ENCODE measurements at regions of chr2 and their contacts with region 1.

Region 1: GRCh38 chr2:224369028-224369632 is 32.8 kb downstream of the FAM124B start:
- DNase-seq: no peak
- ATAC-seq: no peak
- H3K4me3 ChIP-seq: no peak overlapping the region
- H3K27ac ChIP-seq: no peak overlapping the region
- H3K4me1 ChIP-seq: no peaks in the 10 kb centered on the region
- H3K27me3 ChIP-seq: no peaks in the 10 kb centered on the region
- CTCF ChIP-seq: peak; percentile 76

Region 2: DNA sequence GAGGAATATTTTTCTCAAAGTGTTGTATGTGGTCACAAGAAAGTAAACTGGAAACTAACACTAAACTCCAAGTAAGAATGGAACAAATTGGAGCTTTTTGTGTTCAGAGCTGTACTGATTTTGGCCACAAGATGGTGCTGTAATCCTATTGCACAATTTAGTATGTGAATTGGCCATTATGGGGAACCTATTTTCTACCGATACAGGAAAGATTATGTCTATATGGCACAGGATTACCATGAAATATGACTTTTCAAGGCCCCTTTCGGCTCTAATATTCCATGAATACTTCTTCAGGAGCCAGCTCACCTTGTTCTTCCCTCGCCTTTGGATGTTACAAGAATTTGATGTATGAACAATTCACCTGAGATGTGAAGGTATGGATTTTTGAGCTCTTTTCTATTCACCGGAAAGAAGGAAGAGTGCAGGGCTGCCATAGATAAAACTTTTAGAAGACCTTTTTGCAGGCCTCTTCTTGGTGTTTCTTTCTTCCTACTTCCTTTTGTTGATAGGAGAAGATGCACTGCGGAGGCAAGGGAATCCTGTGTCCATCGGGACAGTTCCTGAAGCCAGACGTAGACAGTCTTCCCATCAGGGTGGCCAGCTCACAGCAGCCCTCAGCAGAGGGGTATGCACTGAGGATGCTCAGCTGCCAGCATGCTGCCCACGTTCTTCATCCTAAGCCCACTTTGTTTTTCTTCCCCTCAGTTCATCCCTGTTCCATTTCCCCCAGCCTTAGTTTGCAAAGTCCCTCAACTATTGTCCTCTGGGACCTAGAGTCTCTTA is 398.6 kb before region 1 on chr2:
- CTCF ChIA-PET with region 1: no interaction called
- POLR2A ChIA-PET with region 1: no interaction called
- in situ Hi-C with region 1: no loop called
- intact Hi-C with region 1: loop called (anchors 10 kb)
- DNase-seq: peak; percentile 45
- ATAC-seq: peak; percentile 75
- H3K4me3 ChIP-seq: no peak overlapping the region
- H3K27ac ChIP-seq: no peak overlapping the region
- H3K4me1 ChIP-seq: no peaks in the 10 kb centered on the region
- H3K27me3 ChIP-seq: no peaks in the 10 kb centered on the region
- CTCF ChIP-seq: peak; percentile 84; the same call in 1 of the 2 replicates

Region 3: DNA sequence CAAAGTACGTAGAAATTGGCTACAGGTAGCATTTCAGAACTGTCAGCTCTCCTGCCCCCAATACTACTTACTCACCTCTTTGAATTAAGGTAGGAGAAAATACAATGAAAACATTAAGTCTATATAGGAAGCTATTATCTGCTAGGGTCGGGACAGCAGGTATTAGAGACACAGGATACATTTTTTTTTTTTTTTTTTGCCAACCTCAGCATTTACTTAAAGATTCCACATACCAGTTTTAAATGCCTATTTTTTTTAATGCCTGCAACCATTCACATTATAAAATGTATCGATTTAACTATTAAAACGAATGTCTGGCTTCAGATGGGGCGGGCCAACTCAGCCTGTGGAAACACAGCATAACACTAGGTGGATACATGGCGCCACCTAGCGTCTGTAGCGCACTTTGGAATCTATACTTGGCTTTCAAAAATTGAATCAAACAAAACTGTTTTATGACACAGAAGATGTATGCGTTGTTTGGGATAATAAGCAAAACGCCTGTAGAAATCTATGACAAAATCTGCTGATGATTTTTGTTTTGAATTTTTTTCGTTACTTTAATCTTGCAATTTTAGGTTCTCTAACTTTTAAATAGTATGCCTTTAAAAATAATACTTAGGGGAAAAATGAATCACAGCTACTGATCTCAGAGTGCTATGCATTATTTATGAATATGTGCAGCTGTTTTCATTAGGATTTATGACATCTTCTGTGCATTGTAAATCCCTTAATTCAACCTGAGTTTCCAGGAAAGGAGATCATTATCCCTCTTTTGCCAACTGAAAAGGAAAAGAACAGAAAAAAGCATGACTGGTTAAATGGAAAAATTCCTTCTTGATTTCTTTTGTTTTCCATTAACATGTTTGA is 1291.4 kb after region 1 on chr2:
- CTCF ChIA-PET with region 1: no interaction called
- POLR2A ChIA-PET with region 1: no interaction called
- in situ Hi-C with region 1: no loop called
- intact Hi-C with region 1: no loop called
- DNase-seq: no peak
- ATAC-seq: peak; percentile 86
- H3K4me3 ChIP-seq: no peak overlapping the region
- H3K27ac ChIP-seq: no peak overlapping the region
- H3K4me1 ChIP-seq: no peaks in the 10 kb centered on the region
- H3K27me3 ChIP-seq: no peaks in the 10 kb centered on the region; the same call in 1 of the 2 replicates
- CTCF ChIP-seq: peak; percentile 89